Dendritic cell treated with granulocyte-macrophage colony-stimulating factor and Interleukin-4, amounts not matched to agents 40 ng/mL and 50 ng/mL, for 4 days (primary cell): ENCODE measurements at regions of chr11 and their contacts with region 1.

Region 1: GRCh38 chr11:112588252-112588694 is 327.6 kb upstream of the PLET1 start:
- H3K4me3 Mint-ChIP-seq: no peak overlapping the region
- H3K27ac Mint-ChIP-seq: no peak overlapping the region
- H3K4me1 Mint-ChIP-seq: peaks cover 8% of the 10 kb centered on the region
- H3K27me3 Mint-ChIP-seq: peaks cover 11% of the 10 kb centered on the region

Region 2: DNA sequence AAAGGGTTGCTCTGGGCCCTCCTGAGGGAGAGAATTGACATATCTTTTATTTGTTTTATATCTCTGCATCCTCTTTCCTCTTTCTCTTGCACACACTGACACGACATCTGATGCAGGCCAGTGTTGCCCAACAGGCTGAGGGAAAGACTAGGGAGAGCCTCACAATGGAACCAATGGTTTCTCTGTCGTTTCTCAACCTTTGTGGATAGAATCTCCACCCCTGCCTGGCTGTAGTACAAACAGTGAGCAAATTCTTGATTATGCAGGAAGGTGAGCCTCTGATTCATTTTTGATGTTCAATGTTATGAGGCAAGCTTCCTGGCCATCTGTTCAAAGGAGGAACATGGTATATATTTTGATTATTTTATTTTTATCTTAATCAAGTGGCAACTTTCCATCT is 277.9 kb before region 1 on chr11:
- intact Hi-C with region 1: no loop called
- H3K4me3 Mint-ChIP-seq: no peak overlapping the region
- H3K27ac Mint-ChIP-seq: no peak overlapping the region
- H3K4me1 Mint-ChIP-seq: no peaks in the 10 kb centered on the region
- H3K27me3 Mint-ChIP-seq: no peaks in the 10 kb centered on the region

Region 3: DNA sequence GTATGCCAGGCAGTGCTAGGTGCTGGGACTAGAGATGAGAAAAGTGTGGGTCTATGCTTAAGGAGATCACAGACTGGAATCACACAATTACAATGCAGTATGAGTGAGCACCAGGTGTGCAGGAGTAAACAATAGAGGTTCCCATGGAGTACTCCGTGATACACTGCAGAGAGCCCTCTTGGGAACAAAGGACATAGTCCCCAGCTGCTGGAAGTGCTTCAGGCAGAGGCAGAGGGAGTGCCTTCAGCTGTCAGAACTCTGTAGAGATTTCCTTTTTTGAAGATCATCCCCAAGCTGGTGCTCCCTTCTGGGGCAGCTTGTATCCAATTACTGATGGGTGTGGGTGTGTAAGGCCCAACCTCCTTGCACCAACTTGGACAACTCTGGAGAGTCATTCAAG is 184.2 kb before region 1 on chr11:
- intact Hi-C with region 1: no loop called
- H3K4me3 Mint-ChIP-seq: no peak overlapping the region
- H3K27ac Mint-ChIP-seq: no peak overlapping the region
- H3K4me1 Mint-ChIP-seq: no peaks in the 10 kb centered on the region
- H3K27me3 Mint-ChIP-seq: peaks cover 3% of the 10 kb centered on the region

Region 4: GRCh38 chr11:112795142-112795815 is 207.0 kb after region 1 on chr11:
- intact Hi-C with region 1: loop called (anchors 1 kb)
- H3K4me3 Mint-ChIP-seq: no peak overlapping the region
- H3K27ac Mint-ChIP-seq: no peak overlapping the region
- H3K4me1 Mint-ChIP-seq: peaks cover 6% of the 10 kb centered on the region
- H3K27me3 Mint-ChIP-seq: no peaks in the 10 kb centered on the region

Region 5: DNA sequence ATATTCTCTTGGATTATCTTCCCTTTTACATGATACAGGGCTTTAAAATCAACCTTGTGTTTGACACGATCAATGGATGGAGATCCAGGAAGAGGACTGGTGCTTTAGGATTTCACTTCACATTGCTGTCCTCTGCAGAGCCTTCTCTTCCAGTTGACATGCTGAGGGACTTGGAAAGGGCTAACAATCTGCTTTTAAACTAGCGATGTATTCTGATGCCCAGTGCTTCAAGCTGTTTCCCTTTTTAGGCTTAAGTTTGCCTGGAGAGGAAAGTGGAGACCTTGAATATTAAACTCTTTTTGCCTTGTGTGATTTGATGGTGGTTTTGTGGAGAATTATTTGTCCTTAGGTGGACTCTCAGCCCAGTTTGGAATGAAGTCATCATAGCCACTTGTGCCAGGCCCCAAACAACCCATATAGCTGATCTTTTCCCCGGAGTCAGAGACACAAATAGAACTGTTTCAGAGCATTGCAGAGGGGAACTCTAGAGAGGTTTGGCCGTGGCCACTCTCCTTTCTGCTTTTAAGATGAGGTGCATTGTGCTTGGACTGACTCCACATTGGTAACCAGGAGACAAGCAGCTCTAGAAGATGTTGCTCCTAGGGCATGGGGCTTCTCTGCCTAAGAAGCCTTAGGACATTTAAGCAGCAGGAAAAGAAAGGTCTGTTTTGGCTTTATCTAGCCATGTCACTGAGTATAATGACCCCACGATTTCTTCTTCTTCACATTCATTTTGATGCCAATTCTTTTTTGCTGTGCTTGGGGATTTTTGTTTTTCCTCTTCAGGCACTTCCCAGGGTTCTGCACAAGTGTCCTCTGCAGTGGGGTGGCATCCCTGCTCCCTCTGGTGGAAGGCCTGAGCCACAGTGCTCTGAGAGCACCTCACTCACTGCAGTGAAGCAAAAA is 525.8 kb after region 1 on chr11:
- intact Hi-C with region 1: loop called (anchors 1 kb)
- H3K4me3 Mint-ChIP-seq: no peak overlapping the region
- H3K27ac Mint-ChIP-seq: no peak overlapping the region
- H3K4me1 Mint-ChIP-seq: peaks cover 6% of the 10 kb centered on the region
- H3K27me3 Mint-ChIP-seq: peaks cover 3% of the 10 kb centered on the region

Region 6: GRCh38 chr11:113289431-113290187 is 701.3 kb after region 1 on chr11:
- intact Hi-C with region 1: loop called (anchors 1 kb)
- H3K4me3 Mint-ChIP-seq: no peak overlapping the region
- H3K27ac Mint-ChIP-seq: no peak overlapping the region
- H3K4me1 Mint-ChIP-seq: no peaks in the 10 kb centered on the region
- H3K27me3 Mint-ChIP-seq: peaks cover 4% of the 10 kb centered on the region